Endothelial cell of umbilical vein (primary cell): ENCODE measurements at regions of chr6 and their contacts with region 1.

Region 1: GRCh38 chr6:20306491-20306890 is 94.2 kb upstream of the MBOAT1 start:
- DNase-seq: no peak
- H3K4me3 ChIP-seq: no peak overlapping the region
- H3K27ac ChIP-seq: no peak overlapping the region
- H3K4me1 ChIP-seq: no peaks in the 10 kb centered on the region
- H3K27me3 ChIP-seq: no peaks in the 10 kb centered on the region
- CTCF ChIP-seq: no peak
- POLR2A ChIP-seq: no peak

Region 2: DNA sequence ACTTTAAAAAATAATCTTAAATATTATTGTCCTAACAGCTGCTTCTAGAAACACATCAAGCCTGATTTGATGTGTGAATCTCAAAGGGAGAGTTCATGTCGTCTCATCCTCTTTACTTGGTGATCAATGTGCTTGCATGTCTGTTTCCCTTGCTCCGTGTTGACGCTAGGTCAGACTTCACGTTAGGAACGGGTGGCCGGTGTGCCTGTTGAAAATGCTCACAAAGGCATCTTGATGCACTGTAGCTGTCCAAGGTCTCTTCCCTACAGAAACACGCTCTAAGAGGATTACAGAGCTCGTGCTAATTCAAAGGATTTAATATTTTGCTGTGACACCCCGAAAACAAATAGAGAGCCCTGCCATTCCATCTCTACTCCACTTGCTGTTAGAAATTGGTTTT is 384.7 kb before region 1 on chr6:
- CTCF ChIA-PET with region 1: no interaction called
- POLR2A ChIA-PET with region 1: no interaction called
- dilution Hi-C with region 1: no loop called
- intact Hi-C with region 1: loop called (anchors 5 kb)
- DNase-seq: no peak
- H3K4me3 ChIP-seq: no peak overlapping the region
- H3K27ac ChIP-seq: no peak overlapping the region
- H3K4me1 ChIP-seq: no peaks in the 10 kb centered on the region
- H3K27me3 ChIP-seq: no peaks in the 10 kb centered on the region
- CTCF ChIP-seq: no peak
- POLR2A ChIP-seq: no peak

Region 3: DNA sequence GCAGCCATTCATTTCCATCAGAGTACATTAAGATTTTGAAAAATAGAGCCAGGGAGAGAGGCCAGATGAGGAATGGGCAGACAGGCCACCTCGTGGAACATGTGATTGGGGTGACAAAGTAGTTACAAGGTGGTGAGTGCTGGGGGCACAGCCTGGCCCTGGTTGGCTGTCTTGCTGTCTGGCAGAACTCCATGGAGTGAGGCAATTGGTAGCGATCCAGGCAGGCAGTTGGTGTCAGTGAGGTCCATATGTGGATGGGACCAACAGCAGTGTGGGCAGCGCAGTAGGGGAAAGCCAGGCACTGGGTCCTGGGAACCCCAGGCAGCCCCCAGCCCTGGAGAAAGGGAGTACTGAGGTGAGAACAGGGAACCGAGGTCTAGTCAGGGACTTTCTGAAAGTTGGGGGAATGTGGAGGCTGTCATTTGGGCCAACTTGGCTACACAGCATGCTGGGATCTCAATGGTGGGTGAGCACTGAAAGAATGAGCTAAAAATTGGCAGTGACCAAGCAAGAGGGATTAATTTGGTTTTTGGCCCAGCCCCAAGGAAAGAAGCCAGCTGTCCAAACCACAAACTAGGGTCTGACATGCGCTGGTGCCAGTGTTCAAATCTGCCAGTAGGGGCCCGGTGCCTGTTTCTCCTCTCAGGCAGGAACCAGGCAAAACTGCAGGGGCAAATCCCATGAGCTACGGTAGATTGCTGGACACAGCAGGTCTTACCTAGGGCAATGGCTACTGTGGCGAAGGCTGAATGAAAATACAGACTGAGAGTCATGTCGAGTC is 33.8 kb after region 1 on chr6:
- CTCF ChIA-PET with region 1: no interaction called
- POLR2A ChIA-PET with region 1: no interaction called
- dilution Hi-C with region 1: no loop called
- intact Hi-C with region 1: no loop called
- DNase-seq: no peak
- H3K4me3 ChIP-seq: no peak overlapping the region
- H3K27ac ChIP-seq: no peak overlapping the region
- H3K4me1 ChIP-seq: no peaks in the 10 kb centered on the region
- H3K27me3 ChIP-seq: peaks cover 0 to 2% of the 10 kb centered on the region in 2 experiments
- CTCF ChIP-seq: no peak
- POLR2A ChIP-seq: no peak

Region 4: GRCh38 chr6:20366091-20366832 is 59.8 kb after region 1 on chr6:
- CTCF ChIA-PET with region 1: no interaction called
- POLR2A ChIA-PET with region 1: no interaction called
- dilution Hi-C with region 1: no loop called
- intact Hi-C with region 1: no loop called
- DNase-seq: no peak
- H3K4me3 ChIP-seq: no peak overlapping the region
- H3K27ac ChIP-seq: no peak overlapping the region
- H3K4me1 ChIP-seq: no peaks in the 10 kb centered on the region
- H3K27me3 ChIP-seq: peaks cover 0 to 2% of the 10 kb centered on the region in 2 experiments
- CTCF ChIP-seq: no peak
- POLR2A ChIP-seq: no peak

Region 5: DNA sequence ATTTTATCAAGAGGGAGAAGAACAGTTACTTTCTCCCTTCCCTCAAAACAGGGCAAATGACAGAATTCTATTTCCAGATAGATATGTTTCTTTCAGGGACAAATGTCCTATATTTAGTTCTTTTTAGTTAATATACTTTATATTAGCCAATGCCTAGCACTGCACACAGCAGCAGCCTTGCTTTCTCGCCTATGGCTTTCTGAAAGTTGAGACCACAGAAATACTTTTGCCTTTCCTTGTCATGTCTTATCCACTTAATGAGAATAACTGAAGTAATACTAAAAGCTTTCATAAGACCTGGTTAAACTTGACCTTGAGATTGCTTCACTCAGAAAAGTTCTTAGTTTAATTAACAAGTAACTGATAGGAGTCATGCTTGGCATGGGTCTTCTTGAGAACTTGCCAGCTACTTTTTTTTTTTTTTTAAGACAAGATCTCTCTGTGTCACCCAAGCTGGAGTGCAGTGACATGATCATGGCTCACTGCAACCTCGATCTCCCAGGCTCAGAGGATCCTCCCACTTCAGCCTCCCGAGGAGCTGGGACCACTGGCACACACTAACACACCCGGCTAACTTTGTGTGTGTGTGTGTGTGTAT is 387.1 kb after region 1 on chr6:
- CTCF ChIA-PET with region 1: no interaction called
- POLR2A ChIA-PET with region 1: no interaction called
- dilution Hi-C with region 1: no loop called
- intact Hi-C with region 1: no loop called
- DNase-seq: no peak
- H3K4me3 ChIP-seq: no peak overlapping the region
- H3K27ac ChIP-seq: no peak overlapping the region
- H3K4me1 ChIP-seq: no peaks in the 10 kb centered on the region
- H3K27me3 ChIP-seq: no peaks in the 10 kb centered on the region
- CTCF ChIP-seq: no peak
- POLR2A ChIP-seq: no peak

Region 6: DNA sequence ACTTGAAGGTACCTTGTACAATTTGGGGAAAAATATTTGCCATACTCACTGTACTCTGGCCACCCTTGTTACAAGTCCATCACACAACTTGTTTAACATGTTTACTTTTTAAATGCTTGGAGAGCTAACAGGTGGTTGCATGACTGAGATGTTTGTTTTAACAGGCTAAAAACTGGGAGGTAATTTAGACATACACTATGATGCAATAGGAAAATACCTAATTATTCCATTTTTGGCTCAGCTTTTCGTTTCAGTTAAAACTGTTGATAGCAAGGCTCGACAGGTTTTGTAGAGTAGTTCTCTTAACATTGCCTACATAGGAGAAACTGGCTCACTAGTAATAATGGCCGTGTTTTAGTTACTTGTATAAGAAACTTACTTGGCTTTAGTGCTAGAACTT is 797.2 kb after region 1 on chr6:
- CTCF ChIA-PET with region 1: no interaction called
- POLR2A ChIA-PET with region 1: no interaction called
- dilution Hi-C with region 1: no loop called
- intact Hi-C with region 1: no loop called
- DNase-seq: no peak
- H3K4me3 ChIP-seq: no peak overlapping the region
- H3K27ac ChIP-seq: no peak overlapping the region
- H3K4me1 ChIP-seq: peaks cover 2% of the 10 kb centered on the region
- H3K27me3 ChIP-seq: no peaks in the 10 kb centered on the region
- CTCF ChIP-seq: no peak
- POLR2A ChIP-seq: no peak